ENCODE measurements at regions of chr12 and their contacts with region 1.

Region 1: DNA sequence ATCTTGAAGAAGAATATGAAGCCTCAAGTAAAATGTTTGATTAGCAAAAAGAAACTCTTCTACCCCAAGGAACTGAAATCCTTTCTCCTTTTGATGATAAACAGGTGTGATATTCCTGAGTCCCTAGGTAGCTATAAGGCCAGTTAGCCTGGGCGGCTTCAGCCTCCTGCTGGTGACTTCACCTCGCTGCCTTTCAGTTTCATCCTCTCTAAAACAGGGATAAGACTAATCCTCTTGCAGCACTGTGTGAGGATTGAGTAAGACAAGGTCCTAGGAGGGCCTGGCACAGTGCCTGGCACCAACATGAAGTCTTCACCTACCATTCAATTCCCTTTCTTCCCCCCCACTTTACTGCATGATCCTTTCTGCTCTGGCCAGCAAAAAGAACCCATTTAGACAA is 42.1 kb downstream of the CIT start:
- DNase-seq: no peak

Region 2: DNA sequence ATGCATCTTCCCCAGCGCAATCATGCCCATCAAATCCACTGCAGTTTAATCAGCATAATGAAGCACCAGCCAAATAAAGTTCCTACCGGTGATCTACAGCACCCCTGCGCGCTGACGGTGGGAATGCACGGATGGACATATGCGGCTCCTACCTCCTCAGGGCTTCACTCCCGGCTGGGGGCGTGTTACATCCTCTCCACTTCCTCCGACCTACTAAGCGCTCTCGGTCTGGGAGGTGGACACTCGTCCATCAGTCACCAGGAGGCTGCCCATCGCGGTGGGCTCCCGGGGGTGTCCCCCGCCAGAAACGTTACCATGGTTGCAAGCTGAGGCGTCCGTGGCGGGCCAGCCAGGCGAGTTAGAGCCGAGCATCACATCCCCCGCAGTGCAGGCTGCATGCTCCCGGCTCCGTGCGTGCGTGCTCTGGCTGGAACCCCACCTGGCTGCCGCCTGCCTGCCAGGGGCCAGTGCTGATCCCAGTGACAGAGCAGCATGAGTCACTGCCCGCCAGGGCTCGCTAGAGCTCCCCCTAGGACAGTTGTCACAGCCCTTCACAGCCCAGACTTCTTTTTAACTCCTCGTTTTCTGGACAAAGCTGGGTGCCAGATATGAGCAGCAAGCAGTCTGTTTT is 30.9 kb before region 1 on chr12:
- intact Hi-C with region 1: loop called in 1 of 2 experiments (anchors 1 kb)
- DNase-seq: peak; percentile 85